Aorta (tissue), 5 donors: ENCODE measurements at regions of chr1 and their contacts with region 1.

Region 1: GRCh38 chr1:229117664-229118300 is 153.1 kb upstream of the RAB4A start:
- DNase-seq: peak; percentile 88
- ATAC-seq: peak; percentile 82
- H3K4me3 ChIP-seq: no peak overlapping the region
- H3K27ac ChIP-seq: peak overlapping the region in 1 of 2 donors; percentile 39
- H3K4me1 ChIP-seq: peaks cover 0 to 4% of the 10 kb centered on the region in 2 donors
- H3K27me3 ChIP-seq: no peaks in the 10 kb centered on the region

Region 2: GRCh38 chr1:229080361-229080760 is 37.4 kb before region 1 on chr1:
- intact Hi-C with region 1: loop called in 1 of 2 experiments (anchors 5 kb)
- DNase-seq: no peak
- ATAC-seq: no peak
- H3K4me3 ChIP-seq: no peak overlapping the region
- H3K27ac ChIP-seq: no peak overlapping the region
- H3K4me1 ChIP-seq: no peaks in the 10 kb centered on the region
- H3K27me3 ChIP-seq: no peaks in the 10 kb centered on the region